Heart left ventricle (tissue), 16 donors: ENCODE measurements at regions of chr1 and their contacts with region 1.

Region 1: GRCh38 chr1:152001391-152002249 is 8.0 kb upstream of the S100A10 start:
- DNase-seq: peak; percentile 80 to 91 (median 85)
- ATAC-seq: peak; percentile 23 to 67 (median 61)
- H3K4me3 ChIP-seq: no peak overlapping the region
- H3K27ac ChIP-seq: peak overlapping the region in 7 of 12 donors; percentile 20 to 88 (median 50)
- H3K4me1 ChIP-seq: peaks cover 0 to 24% (median 5%) of the 10 kb centered on the region in 12 donors
- H3K27me3 ChIP-seq: no peaks in the 10 kb centered on the region
- CTCF ChIP-seq: peak; percentile 87 to 97 (median 92)
- POLR2A ChIP-seq: no peak

Region 2: GRCh38 chr1:151762941-151763921 is 238.4 kb before region 1 on chr1 and contains the start of gene MRPL9:
- intact Hi-C with region 1: loop called in 1 of 10 experiments (anchors 10 kb)
- DNase-seq: peak; percentile 81 to 91 (median 86)
- ATAC-seq: peak; percentile 97 to 99 (median 99)
- H3K4me3 ChIP-seq: peak within 1 kb of the TSS; percentile 63 to 96 (median 82)
- H3K27ac ChIP-seq: peak within 1 kb of the TSS; percentile 41 to 94 (median 88)
- H3K4me1 ChIP-seq: peaks cover 0 to 17% (median 13%) of the 10 kb centered on the region in 12 donors
- H3K27me3 ChIP-seq: no peaks in the 10 kb centered on the region
- CTCF ChIP-seq: no peak
- POLR2A ChIP-seq: peak in 1 of 2 donors; percentile 35
- total RNA-seq, gene MRPL9: 35.8 to 53.2 (median 46.3) TPM

Region 3: DNA sequence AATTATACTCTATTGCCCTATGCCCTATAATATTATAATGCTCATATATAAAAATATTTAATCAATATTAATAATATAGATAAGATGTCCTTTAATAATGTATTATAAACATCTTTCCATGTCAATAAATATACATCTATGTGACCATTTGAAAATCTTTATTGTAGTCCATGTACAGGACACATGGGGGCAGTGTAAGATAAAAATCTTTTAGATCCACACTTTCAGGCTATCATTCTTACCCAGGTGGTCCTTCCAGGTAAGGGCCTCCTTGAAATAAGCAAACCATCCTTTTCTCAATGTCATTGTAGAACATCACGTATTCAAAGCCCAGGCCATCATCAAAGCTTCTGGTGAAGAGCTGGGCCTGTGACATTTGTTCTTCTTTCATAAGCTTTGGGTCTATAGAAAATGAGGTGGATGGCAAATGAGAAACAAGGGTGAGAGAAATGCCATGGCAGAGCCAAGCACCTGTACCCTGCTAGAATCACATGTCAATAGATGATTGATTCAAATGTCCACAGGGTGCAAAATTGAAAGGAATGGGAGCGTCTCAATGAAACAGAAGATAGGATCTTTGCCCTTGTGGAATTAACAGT is 112.5 kb before region 1 on chr1:
- intact Hi-C with region 1: loop called in 2 of 10 experiments (anchors 5 kb)
- DNase-seq: no peak
- ATAC-seq: no peak
- H3K4me3 ChIP-seq: no peak overlapping the region
- H3K27ac ChIP-seq: no peak overlapping the region
- H3K4me1 ChIP-seq: no peaks in the 10 kb centered on the region
- H3K27me3 ChIP-seq: no peaks in the 10 kb centered on the region
- CTCF ChIP-seq: peak in 10 of 12 donors; percentile 15 to 49 (median 35)
- POLR2A ChIP-seq: no peak

Region 4: DNA sequence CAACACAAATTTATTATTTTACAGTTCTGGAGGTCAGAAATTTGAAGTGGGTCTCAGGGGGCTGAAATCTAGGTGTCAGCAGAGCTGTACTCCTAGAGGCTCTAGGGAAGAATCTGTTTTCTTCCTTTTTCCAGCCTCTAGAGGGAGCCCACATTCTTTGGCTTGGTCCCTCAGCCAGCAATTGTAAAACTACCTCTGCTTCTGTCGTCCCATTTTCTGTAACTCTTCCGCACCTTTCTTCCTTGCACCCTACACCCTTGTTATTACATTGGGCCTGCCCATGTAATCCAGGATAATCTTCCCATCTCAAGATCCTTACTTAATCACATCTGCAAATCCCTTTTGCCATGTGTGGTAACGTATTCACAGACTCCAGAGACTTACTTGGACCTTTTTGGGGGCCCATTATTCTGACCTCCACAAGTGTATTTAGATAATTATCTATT is 67.5 kb before region 1 on chr1:
- intact Hi-C with region 1: loop called (anchors 1 to 2 kb)
- DNase-seq: peak in 2 of 5 donors; percentile 30 to 48
- ATAC-seq: peak; percentile 71 to 91 (median 86)
- H3K4me3 ChIP-seq: no peak overlapping the region
- H3K27ac ChIP-seq: no peak overlapping the region
- H3K4me1 ChIP-seq: no peaks in the 10 kb centered on the region
- H3K27me3 ChIP-seq: no peaks in the 10 kb centered on the region
- CTCF ChIP-seq: peak; percentile 73 to 95 (median 86)
- POLR2A ChIP-seq: no peak

Region 5: GRCh38 chr1:151968058-151968457 is 33.6 kb before region 1 on chr1:
- intact Hi-C with region 1: loop called in 7 of 10 experiments (anchors 1 to 5 kb)
- DNase-seq: peak in 2 of 5 donors; percentile 25 to 37
- ATAC-seq: peak in 3 of 4 donors; percentile 72 to 79 (median 77)
- H3K4me3 ChIP-seq: no peak overlapping the region
- H3K27ac ChIP-seq: no peak overlapping the region
- H3K4me1 ChIP-seq: peaks cover 0 to 35% (median 12%) of the 10 kb centered on the region in 12 donors
- H3K27me3 ChIP-seq: no peaks in the 10 kb centered on the region
- CTCF ChIP-seq: peak; percentile 56 to 75 (median 68)
- POLR2A ChIP-seq: no peak